ENCODE measurements at regions of chr6 and their contacts with region 1.

Region 1: DNA sequence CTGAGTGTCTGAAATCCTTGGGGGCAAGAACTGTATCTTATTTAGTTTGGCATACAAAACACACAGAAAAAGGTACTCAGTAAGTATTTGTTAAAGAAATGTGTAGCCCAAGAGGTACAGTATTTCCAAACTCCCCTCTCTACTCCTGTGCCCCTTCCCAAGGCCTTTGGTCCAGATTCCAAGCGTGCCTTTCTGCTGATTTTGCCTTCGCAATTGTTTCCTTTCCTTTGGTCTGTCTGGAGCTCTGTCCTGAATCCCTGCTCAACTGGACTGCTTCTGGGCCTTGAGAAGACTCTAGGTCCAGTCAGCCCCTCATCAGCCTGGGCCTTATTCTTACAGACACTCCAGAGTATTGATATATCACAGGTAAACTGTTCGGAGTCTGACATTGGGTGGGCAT is 122.2 kb upstream of the SYNCRIP start:
- DNase-seq: no peak
- ATAC-seq: no peak
- H3K4me3 ChIP-seq: no peak overlapping the region
- H3K27ac ChIP-seq: no peak overlapping the region
- H3K4me1 ChIP-seq: no peaks in the 10 kb centered on the region
- H3K27me3 ChIP-seq: no peaks in the 10 kb centered on the region
- CTCF ChIP-seq: no peak

Region 2: DNA sequence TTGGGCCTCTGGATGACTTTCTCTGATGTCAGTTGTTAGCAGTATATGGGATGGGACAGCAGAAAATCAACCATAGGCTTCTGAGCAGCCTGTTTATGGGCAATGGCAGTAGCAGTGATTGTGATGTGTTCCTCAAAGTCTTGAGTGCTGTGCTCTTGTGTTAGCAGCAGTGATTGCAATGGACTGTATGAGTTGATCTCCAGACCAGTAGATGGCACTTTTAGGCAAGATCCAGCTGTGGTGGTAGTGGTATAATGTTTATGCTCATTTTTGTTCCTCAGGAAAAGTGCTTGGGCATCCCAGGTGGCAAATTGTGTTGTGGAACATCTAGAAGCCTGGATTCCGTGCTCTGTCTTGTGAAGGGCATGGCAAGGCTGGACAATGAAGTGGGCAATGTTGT is 59.5 kb after region 1 on chr6:
- CTCF ChIA-PET with region 1: no interaction called
- POLR2A ChIA-PET with region 1: no interaction called
- in situ Hi-C with region 1: no loop called
- intact Hi-C with region 1: no loop called
- DNase-seq: no peak
- ATAC-seq: no peak
- H3K4me3 ChIP-seq: no peak overlapping the region
- H3K27ac ChIP-seq: no peak overlapping the region
- H3K4me1 ChIP-seq: no peaks in the 10 kb centered on the region
- H3K27me3 ChIP-seq: no peaks in the 10 kb centered on the region
- CTCF ChIP-seq: no peak; the same call in 1 of the 2 replicates

Region 3: GRCh38 chr6:85911067-85911466 is 146.2 kb after region 1 on chr6:
- CTCF ChIA-PET with region 1: no interaction called
- POLR2A ChIA-PET with region 1: no interaction called
- in situ Hi-C with region 1: no loop called
- intact Hi-C with region 1: loop called (anchors 10 kb)
- DNase-seq: no peak
- ATAC-seq: peak; percentile 34; the same call in 1 of the 2 replicates
- H3K4me3 ChIP-seq: no peak overlapping the region
- H3K27ac ChIP-seq: no peak overlapping the region
- H3K4me1 ChIP-seq: no peaks in the 10 kb centered on the region
- H3K27me3 ChIP-seq: no peaks in the 10 kb centered on the region
- CTCF ChIP-seq: no peak